ENCODE measurements at regions of chr13 and their contacts with region 1.

Region 1: GRCh38 chr13:50081679-50082425 is 66.6 kb downstream of the KCNRG start:
- H3K4me3 ChIP-seq: peak overlapping the region; percentile 99
- H3K27ac ChIP-seq: peak overlapping the region; percentile 100
- H3K4me1 ChIP-seq: peaks cover 9% of the 10 kb centered on the region
- CTCF ChIP-seq: no peak; the same call in 1 of the 2 replicates

Region 2: GRCh38 chr13:49996951-49997895 is 84.6 kb before region 1 on chr13 and contains the start of gene TRIM13:
- CTCF ChIA-PET with region 1: no interaction called
- POLR2A ChIA-PET with region 1: interaction called, 23 read pairs
- H3K4me3 ChIP-seq: peak within 1 kb of the TSS; percentile 92
- H3K27ac ChIP-seq: peak within 1 kb of the TSS; percentile 97
- H3K4me1 ChIP-seq: 0 out of 2 replicates have a peak, but pooled peaks cover 3% of the 10 kb centered on the region
- CTCF ChIP-seq: no peak; the same call in 1 of the 2 replicates

Region 3: GRCh38 chr13:50123862-50124536 is 42.1 kb after region 1 on chr13:
- CTCF ChIA-PET with region 1: interaction called, 7 read pairs
- POLR2A ChIA-PET with region 1: interaction called, 50 read pairs
- H3K4me3 ChIP-seq: peak overlapping the region; percentile 63
- H3K27ac ChIP-seq: peak overlapping the region; percentile 99
- H3K4me1 ChIP-seq: peaks cover 6% of the 10 kb centered on the region
- CTCF ChIP-seq: no peak

Region 4: GRCh38 chr13:50309882-50310594 is 228.2 kb after region 1 on chr13:
- CTCF ChIA-PET with region 1: no interaction called
- POLR2A ChIA-PET with region 1: no interaction called
- H3K4me3 ChIP-seq: no peak overlapping the region
- H3K27ac ChIP-seq: no peak overlapping the region
- H3K4me1 ChIP-seq: 0 out of 2 replicates have a peak, but pooled peaks cover 5% of the 10 kb centered on the region
- CTCF ChIP-seq: no peak

Region 5: GRCh38 chr13:50801087-50801931 is 719.5 kb after region 1 on chr13:
- CTCF ChIA-PET with region 1: interaction called, 11 read pairs
- POLR2A ChIA-PET with region 1: no interaction called
- H3K4me3 ChIP-seq: no peak overlapping the region
- H3K27ac ChIP-seq: no peak overlapping the region
- H3K4me1 ChIP-seq: no peaks in the 10 kb centered on the region
- CTCF ChIP-seq: no peak; the same call in 1 of the 2 replicates

Measured in HEK293 (cell line).